Ascending aorta (tissue), 2 donors: ENCODE measurements at regions of chr3 and their contacts with region 1.

Region 1: GRCh38 chr3:102229062-102229655 is 205.7 kb upstream of the ZPLD1 start:
- DNase-seq: peak in 1 of 2 donors; percentile 86
- H3K4me3 ChIP-seq: no peak overlapping the region
- H3K27ac ChIP-seq: no peak overlapping the region
- H3K4me1 ChIP-seq: no peaks in the 10 kb centered on the region
- H3K27me3 ChIP-seq: no peaks in the 10 kb centered on the region
- CTCF ChIP-seq: peak; percentile 74 to 96 (median 93)

Region 2: DNA sequence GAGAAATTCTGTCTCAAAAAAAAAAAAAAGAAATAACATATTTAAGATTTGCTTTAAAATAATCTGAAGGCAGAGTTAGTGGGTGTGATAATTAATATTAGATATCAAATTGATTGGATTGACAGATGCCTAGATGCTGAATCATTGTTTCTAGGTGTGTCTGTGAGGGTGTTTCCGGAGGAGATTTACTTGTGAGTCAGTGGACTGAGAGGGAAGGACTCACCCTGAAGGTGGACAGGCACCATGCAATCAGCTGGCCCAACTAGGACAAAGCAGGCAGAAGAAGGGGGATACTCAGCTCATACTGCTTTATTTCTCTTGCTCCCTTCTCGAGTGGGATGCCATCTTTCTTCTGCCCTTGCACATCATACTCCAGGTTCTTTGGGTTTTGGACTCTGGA is 526.0 kb before region 1 on chr3:
- intact Hi-C with region 1: loop called (anchors 10 kb)
- DNase-seq: no peak
- H3K4me3 ChIP-seq: no peak overlapping the region
- H3K27ac ChIP-seq: no peak overlapping the region
- H3K4me1 ChIP-seq: no peaks in the 10 kb centered on the region
- H3K27me3 ChIP-seq: no peaks in the 10 kb centered on the region
- CTCF ChIP-seq: no peak

Region 3: DNA sequence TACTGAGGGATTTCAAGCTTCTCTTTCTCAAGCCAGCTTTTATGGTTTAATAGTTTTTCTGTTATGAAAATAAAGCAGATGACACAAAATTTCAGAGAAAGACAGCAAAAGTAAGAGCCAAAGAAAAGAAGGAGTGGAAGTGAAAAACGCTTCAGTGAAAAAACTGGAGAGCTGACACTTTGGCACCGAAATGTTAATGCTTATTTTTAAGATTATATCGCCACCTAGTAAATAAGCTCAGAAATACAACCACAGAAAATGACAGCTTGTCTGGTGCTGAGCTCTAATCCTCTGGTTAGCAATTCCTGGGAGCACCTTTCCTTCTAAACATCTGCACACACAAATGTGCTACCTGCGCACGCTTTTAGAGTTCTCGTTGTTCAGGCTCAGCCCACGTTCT is 307.3 kb after region 1 on chr3:
- intact Hi-C with region 1: loop called (anchors 1 kb)
- DNase-seq: no peak
- H3K4me3 ChIP-seq: no peak overlapping the region
- H3K27ac ChIP-seq: no peak overlapping the region
- H3K4me1 ChIP-seq: no peaks in the 10 kb centered on the region
- H3K27me3 ChIP-seq: no peaks in the 10 kb centered on the region
- CTCF ChIP-seq: peak; percentile 15 to 52 (median 18)